PC-9 (cell line): ENCODE measurements at regions of chr5 and their contacts with region 1.

Region 1: DNA sequence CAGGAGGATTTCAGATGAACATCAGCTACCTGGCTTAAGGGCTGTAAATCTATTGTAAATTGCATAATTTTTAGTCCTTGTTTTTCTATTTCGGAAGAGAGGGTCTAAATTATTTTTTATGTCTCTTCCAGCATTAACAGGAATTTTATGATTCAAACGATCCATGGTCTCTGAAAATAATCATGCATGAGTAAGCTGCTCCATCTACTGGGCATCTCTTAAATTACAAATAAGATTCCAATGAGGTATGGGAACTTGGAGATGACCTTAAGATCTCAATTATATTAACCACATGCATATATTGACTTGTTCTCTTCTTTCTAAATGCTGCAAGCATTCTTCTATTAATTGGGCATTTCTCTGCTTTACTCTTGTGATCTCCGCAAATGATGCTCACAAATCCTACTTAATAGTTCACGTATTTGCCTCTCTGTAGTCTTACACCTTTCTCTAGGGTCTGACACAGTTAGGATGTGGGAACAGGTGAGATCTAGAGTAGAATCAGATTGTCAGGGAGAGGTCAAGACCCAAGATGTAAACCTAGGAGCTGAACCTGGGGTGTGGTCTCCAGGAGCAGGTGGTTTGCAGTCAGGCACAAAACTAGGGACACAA is 86.9 kb downstream of the NUDT12 start:
- DNase-seq: peak in 1 of 2 experiments; percentile 47
- H3K4me3 ChIP-seq: no peak overlapping the region
- H3K27ac ChIP-seq: no peak overlapping the region
- H3K4me1 ChIP-seq: peaks cover 13% of the 10 kb centered on the region
- H3K27me3 ChIP-seq: no peaks in the 10 kb centered on the region
- CTCF ChIP-seq: peak; percentile 86

Region 2: DNA sequence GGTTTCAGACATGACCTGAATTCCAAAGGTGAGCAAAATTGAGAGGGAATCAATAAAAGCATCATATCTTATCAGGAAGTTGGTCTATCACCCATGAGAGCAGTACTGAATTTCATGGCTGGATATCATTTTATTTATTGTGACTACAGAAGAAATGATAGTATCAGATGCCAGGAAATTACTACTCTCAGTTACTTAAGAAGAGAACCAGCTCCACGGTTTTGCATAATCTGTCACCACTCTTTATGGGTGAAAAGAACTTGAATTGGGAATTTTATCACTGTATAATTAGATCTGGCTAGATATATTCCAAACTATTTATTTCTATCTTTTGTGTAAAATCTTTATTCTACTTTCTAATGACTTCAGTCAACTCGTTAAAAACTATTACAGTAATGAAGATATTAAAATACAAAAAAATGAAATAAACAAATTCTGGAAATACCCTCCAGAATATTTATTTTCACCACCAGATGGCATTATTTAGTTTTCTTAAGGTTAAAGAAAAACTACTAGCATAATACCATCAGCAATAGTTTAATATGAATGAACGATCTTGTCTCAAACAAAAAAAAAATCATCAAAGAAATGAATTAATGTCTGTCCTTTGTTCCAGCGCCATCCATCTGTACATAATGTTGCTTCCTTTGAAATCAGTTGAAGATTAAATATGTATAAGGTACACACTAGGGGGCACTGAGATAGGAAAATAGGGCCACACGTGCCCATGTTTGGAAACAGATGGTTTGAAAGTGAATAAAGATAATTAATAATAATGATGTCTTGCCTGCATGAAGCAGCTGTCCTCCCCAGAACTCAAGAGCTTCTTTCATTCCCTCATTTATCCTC is 892.2 kb before region 1 on chr5:
- CTCF ChIA-PET with region 1: no interaction called
- POLR2A ChIA-PET with region 1: no interaction called
- intact Hi-C with region 1: loop called (anchors 5 kb)
- DNase-seq: no peak
- H3K4me3 ChIP-seq: no peak overlapping the region
- H3K27ac ChIP-seq: no peak overlapping the region
- H3K4me1 ChIP-seq: no peaks in the 10 kb centered on the region
- H3K27me3 ChIP-seq: no peaks in the 10 kb centered on the region
- CTCF ChIP-seq: peak; percentile 74

Region 3: GRCh38 chr5:103041071-103041676 is 434.6 kb before region 1 on chr5:
- CTCF ChIA-PET with region 1: no interaction called
- POLR2A ChIA-PET with region 1: no interaction called
- intact Hi-C with region 1: loop called (anchors 10 kb)
- DNase-seq: peak in 1 of 2 experiments; percentile 57
- H3K4me3 ChIP-seq: no peak overlapping the region
- H3K27ac ChIP-seq: no peak overlapping the region
- H3K4me1 ChIP-seq: 0 out of 2 replicates have a peak, but pooled peaks cover 6% of the 10 kb centered on the region
- H3K27me3 ChIP-seq: no peaks in the 10 kb centered on the region
- CTCF ChIP-seq: peak; percentile 64

Region 4: DNA sequence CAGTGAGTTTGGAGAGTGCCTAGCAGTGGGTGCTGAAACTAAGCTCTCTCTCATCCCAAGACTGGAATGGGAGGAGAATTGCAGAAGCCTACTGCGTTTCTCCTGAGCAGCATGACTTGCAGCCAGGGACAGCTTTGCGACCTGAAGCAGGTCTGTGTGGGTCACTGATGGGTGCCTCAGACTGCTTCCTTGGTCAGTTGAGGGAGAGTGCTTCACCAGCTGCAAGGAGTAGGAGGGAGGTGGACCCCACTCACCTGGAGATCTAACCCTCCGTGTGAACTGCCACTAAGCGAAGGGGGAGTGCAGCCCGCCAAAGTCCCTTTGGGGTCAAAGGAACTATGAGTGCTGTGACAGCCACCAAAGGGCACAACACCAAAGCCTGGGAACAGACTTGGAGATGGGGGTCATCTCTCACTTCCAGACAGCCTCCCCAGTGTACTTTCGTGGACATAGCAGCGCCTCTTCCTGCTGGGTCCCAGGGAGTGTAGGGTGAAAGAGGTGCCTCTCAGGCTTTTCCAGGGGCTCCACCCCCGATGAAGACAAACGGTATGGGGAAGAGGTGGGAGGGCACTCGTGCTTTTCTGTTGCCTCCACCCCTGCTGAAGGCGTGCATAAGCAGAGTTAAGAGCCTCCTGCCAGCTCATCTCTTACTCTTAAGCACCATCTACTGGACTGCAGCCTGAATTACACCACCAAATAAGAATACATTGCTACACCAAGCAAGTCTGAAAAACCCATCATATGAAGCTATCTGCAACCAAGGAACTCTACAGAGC is 251.4 kb before region 1 on chr5:
- CTCF ChIA-PET with region 1: no interaction called
- POLR2A ChIA-PET with region 1: no interaction called
- intact Hi-C with region 1: loop called (anchors 2 kb)
- DNase-seq: peak; percentile 27 to 54
- H3K4me3 ChIP-seq: no peak overlapping the region
- H3K27ac ChIP-seq: no peak overlapping the region
- H3K4me1 ChIP-seq: no peaks in the 10 kb centered on the region
- H3K27me3 ChIP-seq: no peaks in the 10 kb centered on the region
- CTCF ChIP-seq: peak; percentile 83

Region 5: DNA sequence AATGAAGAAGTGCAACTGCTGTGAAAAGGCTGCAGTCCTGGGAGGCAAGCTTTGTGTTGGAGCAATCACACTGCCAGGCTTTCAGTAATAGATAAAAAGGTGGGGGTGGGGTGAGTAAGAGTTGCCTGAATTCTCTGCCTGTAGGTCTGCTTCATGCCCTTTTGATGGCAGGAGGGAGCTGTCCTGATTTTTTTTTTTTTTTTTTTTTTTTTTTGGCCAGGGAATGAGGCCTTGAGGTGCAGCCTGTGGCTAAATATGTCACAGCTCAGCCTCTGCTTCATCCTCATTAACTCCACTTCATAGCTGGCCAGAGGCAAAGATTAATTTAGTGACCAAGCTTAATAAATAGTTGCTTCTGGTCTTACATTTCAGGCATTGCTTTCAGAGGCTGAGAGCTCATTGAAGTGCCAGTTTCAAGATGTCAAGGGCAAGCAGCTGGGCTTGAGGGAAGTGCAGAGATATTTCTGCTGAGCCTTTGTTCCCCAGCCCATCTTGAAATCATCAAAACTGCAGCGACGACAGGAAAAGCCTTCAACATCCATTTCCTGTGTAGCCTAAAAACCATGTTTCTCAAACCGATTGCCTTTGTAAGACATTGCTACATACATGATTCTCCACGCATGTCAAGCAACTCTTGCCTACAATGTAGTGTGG is 82.5 kb before region 1 on chr5:
- CTCF ChIA-PET with region 1: no interaction called
- POLR2A ChIA-PET with region 1: no interaction called
- intact Hi-C with region 1: loop called (anchors 10 kb)
- DNase-seq: no peak
- H3K4me3 ChIP-seq: no peak overlapping the region
- H3K27ac ChIP-seq: no peak overlapping the region
- H3K4me1 ChIP-seq: no peaks in the 10 kb centered on the region
- H3K27me3 ChIP-seq: no peaks in the 10 kb centered on the region
- CTCF ChIP-seq: no peak